Activated T-helper 1 cell treated with anti-CD3 and anti-CD28 coated beads, Interleukin-12 subunit alpha, Interleukin-12 subunit beta, Interleukin-2, Interleukin-4 antibody, amounts not matched to agents 30 ng/mL and 10 ng/mL and 1 ng/mL, durations not matched to agents 14 hours and 24 hours and 36 hours (primary cell): ENCODE measurements at regions of chr9 and their contacts with region 1.

Region 1: DNA sequence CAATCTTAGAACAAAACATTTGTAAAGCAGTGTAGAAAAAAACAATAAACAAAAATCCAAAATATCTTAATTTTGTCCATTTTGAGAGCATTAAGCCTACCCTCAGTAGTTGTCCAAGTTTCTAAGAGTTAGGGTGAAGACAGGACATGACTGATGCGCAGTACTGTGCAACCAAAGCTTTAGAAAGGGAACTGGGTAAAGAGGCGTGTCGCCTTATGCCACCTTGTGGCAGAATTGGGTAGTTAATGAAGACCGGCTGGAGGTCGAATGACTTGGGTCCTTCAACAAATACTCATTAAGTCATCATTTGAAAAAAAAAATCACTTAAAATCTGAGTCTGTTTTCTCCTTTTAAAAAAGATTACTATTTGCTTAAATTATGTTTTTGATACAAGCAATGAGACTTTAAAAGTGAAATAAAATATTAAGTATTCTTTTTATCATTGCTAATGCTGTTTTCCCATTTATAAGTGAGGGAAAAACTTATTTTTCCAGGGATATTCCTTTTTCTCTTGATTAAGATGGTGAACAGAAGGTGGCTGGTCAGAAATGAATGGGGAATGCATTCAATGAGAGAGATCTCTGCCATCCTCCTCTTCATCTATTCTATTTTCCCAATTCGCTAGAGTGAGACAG is 3.5 kb upstream of the RNF20 start:
- DNase-seq: peak; percentile 58
- H3K4me3 Mint-ChIP-seq: no peak overlapping the region
- H3K27ac Mint-ChIP-seq: no peak overlapping the region
- H3K4me1 Mint-ChIP-seq: peaks cover 23% of the 10 kb centered on the region
- H3K27me3 Mint-ChIP-seq: peaks cover 12% of the 10 kb centered on the region

Region 2: DNA sequence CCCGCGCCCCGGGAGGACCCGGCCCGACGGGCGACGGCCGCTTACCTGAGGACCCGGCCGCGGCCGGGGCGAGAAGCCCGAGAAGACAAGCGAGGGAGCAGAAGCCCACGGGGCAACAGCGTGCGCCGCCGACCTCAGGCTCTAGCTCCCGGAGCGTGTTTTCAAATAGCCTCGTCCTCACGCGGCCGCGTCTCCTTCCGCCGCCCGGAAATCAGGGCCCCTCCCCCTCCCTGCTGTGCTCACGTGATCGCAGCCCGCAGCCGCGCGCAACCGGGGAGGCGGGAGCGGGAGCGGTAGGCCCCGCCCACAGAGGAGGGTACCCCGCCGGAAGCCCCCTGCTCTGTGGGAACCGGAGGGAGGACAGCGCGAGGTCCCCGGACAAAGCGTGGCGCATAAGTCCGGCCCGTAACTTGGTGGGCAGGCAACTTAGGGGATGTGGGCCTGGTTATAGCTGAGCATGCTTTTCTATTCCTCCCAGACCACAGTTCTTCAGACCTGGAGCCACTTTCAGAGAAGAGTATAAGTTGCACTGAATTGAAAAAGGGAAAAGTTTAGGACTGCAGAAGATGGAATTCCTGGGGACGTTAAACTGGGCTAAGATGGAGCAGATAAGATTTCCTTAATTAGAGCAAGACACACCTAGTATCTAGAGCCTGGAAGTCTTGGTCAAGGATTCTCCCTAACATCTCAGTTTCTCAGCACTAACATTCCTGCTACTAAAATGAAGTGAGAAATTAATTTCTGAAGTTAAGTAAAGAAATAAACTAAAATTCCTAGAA is 1177.3 kb before region 1 on chr9 and contains the start of gene TEX10:
- intact Hi-C with region 1: loop called (anchors 2 kb)
- DNase-seq: peak; percentile 85
- H3K4me3 Mint-ChIP-seq: peak within 1 kb of the TSS; percentile 91
- H3K27ac Mint-ChIP-seq: peak within 1 kb of the TSS; percentile 75
- H3K4me1 Mint-ChIP-seq: peaks cover 50% of the 10 kb centered on the region
- H3K27me3 Mint-ChIP-seq: no peaks in the 10 kb centered on the region
- total RNA-seq, gene TEX10: 30.4 and 30.9 TPM in 2 replicates

Region 3: GRCh38 chr9:101398068-101398929 is 131.9 kb before region 1 on chr9 and contains the starts of genes MRPL50 and ZNF189:
- intact Hi-C with region 1: loop called (anchors 1 kb)
- DNase-seq: peak; percentile 95
- H3K4me3 Mint-ChIP-seq: peak within 1 kb of the TSS; percentile 98
- H3K27ac Mint-ChIP-seq: peak within 1 kb of the TSS; percentile 99
- H3K4me1 Mint-ChIP-seq: peaks cover 45% of the 10 kb centered on the region
- H3K27me3 Mint-ChIP-seq: no peaks in the 10 kb centered on the region
- total RNA-seq, gene MRPL50: 16.3 and 16.6 TPM in 2 replicates
- total RNA-seq, gene ZNF189: 11.7 and 11.8 TPM in 2 replicates

Region 4: DNA sequence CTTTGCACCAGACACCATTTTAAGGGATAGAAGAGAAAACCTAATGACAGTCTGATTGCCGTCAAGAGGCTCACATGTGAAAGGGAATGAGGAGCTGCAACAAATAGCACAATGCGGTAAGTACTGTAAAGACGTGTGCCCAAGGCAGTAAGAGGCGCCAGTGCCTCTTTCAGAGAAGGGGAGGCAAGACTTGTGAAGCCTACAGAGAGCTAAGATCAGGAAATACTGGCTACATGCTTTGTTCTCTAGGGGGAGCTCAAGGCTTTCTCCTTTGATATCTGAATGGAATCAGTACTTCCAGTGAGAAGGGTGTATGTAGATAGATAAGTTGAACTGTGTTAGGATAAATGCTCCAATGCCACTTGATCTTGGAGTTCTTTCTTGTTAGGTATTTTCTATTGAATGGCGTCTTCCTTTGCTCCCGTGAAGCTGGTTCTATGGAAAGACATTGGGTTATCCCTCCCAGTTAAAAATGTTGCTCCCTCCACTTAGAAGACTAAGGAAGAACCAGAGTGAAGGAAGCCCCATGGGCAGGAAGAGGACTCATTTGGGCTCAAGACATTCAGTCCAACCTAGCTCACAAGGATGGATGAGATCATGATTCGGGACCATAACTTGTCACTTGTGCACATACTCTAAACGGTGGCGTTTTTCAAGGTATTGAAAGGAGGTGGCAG is 71.1 kb before region 1 on chr9:
- intact Hi-C with region 1: loop called (anchors 1 kb)
- DNase-seq: no peak
- H3K4me3 Mint-ChIP-seq: no peak overlapping the region
- H3K27ac Mint-ChIP-seq: no peak overlapping the region
- H3K4me1 Mint-ChIP-seq: no peaks in the 10 kb centered on the region
- H3K27me3 Mint-ChIP-seq: peaks cover 2% of the 10 kb centered on the region

Region 5: GRCh38 chr9:101586651-101587050 is 56.5 kb after region 1 on chr9:
- intact Hi-C with region 1: loop called (anchors 1 kb)
- DNase-seq: peak; percentile 37
- H3K4me3 Mint-ChIP-seq: no peak overlapping the region
- H3K27ac Mint-ChIP-seq: no peak overlapping the region
- H3K4me1 Mint-ChIP-seq: peaks cover 18% of the 10 kb centered on the region
- H3K27me3 Mint-ChIP-seq: peaks cover 9% of the 10 kb centered on the region

Region 6: GRCh38 chr9:101650142-101650541 is 119.9 kb after region 1 on chr9:
- intact Hi-C with region 1: no loop called
- DNase-seq: no peak
- H3K4me3 Mint-ChIP-seq: no peak overlapping the region
- H3K27ac Mint-ChIP-seq: no peak overlapping the region
- H3K4me1 Mint-ChIP-seq: no peaks in the 10 kb centered on the region
- H3K27me3 Mint-ChIP-seq: peaks cover 1% of the 10 kb centered on the region